ENCODE measurements at regions of chr20 and their contacts with region 1.

Region 1: DNA sequence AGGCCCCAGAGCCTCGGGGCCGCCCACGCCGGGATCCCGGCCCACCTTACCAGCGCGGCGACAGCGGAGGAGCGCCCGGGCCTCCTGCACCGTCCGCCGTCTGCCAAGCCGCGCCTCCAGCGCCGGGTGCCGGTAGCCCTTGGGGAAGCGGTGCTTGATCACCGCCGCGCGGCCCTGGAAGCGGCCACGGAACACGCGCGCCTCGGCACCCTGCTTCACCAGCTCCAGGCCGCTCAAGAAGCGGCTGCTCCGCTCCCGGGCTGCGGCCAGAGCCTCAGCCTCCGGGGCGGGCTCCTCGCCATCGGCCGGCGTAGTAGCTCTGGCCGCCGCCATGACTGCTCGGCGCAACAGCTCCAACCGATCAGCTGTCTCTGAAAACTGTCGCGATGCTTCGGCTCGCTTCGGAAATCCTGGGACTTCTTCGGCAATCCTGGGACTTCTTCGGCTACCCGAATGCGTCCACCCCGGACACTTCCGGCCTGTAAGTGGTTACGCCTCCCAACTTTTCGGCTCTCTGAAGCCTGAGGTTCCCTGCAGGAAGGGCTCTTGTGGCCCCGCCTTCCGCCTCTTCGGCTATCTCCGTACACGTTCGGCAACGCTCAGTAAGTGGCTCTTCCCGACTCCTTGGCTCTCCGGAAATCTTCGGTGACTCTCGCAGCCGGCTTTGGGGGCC is at the start of gene TP53RK:
- DNase-seq: peak; percentile 98 to 100 (median 99)
- ATAC-seq: peak; percentile 98
- H3K4me3 ChIP-seq: peak within 1 kb of the TSS; percentile 79
- H3K4me1 ChIP-seq: peaks cover 15% of the 10 kb centered on the region
- CTCF ChIP-seq: peak; percentile 29
- total RNA-seq, gene TP53RK: 7.8 to 10.4 (median 8.2) TPM

Region 2: DNA sequence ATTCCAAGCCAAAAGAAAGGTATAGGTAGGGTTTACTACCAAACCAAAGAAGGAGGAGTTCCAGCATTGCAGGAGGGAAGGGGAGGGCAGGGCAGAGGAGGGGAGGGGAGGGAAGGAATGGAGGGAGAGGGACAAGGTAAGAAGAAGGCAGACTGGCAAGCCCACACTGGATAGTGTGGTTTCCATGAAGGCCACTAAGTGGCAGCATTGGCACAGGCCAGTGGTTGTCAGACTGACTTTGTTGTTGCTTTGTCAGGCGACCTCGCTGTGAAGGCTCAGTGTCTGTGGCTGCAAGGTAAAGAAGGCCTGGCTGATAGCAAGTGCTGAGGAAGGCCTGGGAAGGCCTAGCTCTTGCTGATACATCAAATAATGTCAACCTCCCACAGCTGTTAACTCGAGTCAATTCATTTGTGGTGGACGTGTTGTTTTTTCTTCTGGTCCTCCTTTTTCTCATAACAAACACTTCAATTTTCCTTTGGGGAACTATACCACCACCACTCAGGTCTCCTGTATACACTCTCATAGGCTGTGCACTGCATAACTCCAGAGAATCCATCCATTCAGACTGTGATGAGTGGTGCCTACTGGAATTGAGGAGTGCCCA is 168.1 kb before region 1 on chr20:
- intact Hi-C with region 1: loop called in 1 of 2 experiments (anchors 10 kb)
- DNase-seq: peak in 2 of 3 donors; percentile 58 to 64
- ATAC-seq: peak; percentile 85
- H3K4me3 ChIP-seq: no peak overlapping the region
- H3K4me1 ChIP-seq: no peaks in the 10 kb centered on the region
- CTCF ChIP-seq: peak; percentile 36

Region 3: GRCh38 chr20:46914789-46915379 is 225.7 kb after region 1 on chr20:
- intact Hi-C with region 1: no loop called
- DNase-seq: no peak
- ATAC-seq: no peak
- H3K4me3 ChIP-seq: no peak overlapping the region
- H3K4me1 ChIP-seq: no peaks in the 10 kb centered on the region
- CTCF ChIP-seq: no peak

Region 4: GRCh38 chr20:47051936-47052526 is 362.8 kb after region 1 on chr20:
- intact Hi-C with region 1: no loop called
- DNase-seq: no peak
- ATAC-seq: no peak
- H3K4me3 ChIP-seq: no peak overlapping the region
- H3K4me1 ChIP-seq: no peaks in the 10 kb centered on the region
- CTCF ChIP-seq: no peak

Measured in mucosa of descending colon (tissue), 3 donors.